Left cardiac atrium (tissue), 4 donors: ENCODE measurements at regions of chr5 and their contacts with region 1.

Region 1: DNA sequence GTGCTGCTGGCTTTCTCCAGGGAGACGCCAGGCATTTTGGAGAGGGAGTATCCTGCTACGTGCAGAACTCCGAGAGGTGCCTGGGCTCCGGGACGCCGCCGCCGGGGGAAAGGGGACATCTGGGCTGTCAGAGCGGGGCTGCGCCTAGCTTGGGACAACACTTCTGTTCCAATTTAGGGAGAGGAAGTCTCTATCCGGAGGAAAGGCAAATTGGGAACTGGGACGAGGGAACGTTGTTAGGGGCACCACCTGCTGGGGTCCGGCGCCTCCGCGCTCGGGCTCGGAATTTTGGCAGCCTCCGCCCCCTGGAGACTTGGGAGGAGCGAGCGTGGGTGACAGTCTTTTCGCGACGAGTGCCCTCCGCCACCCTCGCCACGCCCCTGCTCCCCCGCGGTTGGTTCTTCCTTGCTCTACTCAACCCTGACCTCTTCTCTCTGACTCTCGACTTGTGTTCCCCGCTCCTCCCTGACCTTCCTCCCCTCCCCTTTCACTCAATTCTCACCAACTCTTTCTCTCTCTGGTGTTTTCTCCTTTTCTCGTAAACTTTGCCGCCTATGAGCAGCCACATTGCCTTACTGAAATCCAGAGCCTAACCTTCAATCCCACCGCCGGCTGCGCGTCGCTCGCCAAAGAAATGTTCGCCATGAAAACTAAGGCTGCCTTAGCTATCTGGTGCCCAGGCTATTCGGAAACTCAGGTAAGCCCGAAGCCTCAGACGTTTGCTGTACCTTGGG is 1.6 kb downstream of the TSLP start:
- DNase-seq: peak; percentile 68
- ATAC-seq: peak; percentile 87 to 93

Region 2: GRCh38 chr5:110785326-110785725 is 287.8 kb before region 1 on chr5:
- intact Hi-C with region 1: loop called in 1 of 2 experiments (anchors 5 kb)
- DNase-seq: no peak
- ATAC-seq: peak in 1 of 2 donors; percentile 24